Heart right ventricle (tissue), 16 donors: ENCODE measurements at regions of chr6 and their contacts with region 1.

Region 1: GRCh38 chr6:1686117-1687098 is 76.7 kb downstream of the FOXC1 start:
- DNase-seq: peak in 1 of 2 donors; percentile 36
- ATAC-seq: peak; percentile 55 to 93 (median 84)
- H3K4me3 ChIP-seq: no peak overlapping the region
- H3K27ac ChIP-seq: peak overlapping the region in 5 of 10 donors; percentile 4 to 56 (median 31)
- H3K4me1 ChIP-seq: peaks cover 0 to 20% (median 17%) of the 10 kb centered on the region in 9 donors
- H3K27me3 ChIP-seq: no peaks in the 10 kb centered on the region
- CTCF ChIP-seq: peak in 6 of 9 donors; percentile 30 to 55 (median 36)

Region 2: GRCh38 chr6:1724616-1725015 is 38.2 kb after region 1 on chr6:
- intact Hi-C with region 1: loop called in 1 of 10 experiments (anchors 5 kb)
- DNase-seq: peak; percentile 64 to 67
- ATAC-seq: peak; percentile 90 to 99 (median 96)
- H3K4me3 ChIP-seq: no peak overlapping the region
- H3K27ac ChIP-seq: peak overlapping the region in 9 of 10 donors; percentile 39 to 71 (median 62)
- H3K4me1 ChIP-seq: peaks cover 0 to 25% (median 7%) of the 10 kb centered on the region in 9 donors
- H3K27me3 ChIP-seq: no peaks in the 10 kb centered on the region
- CTCF ChIP-seq: no peak

Region 3: GRCh38 chr6:2097464-2097863 is 411.1 kb after region 1 on chr6:
- intact Hi-C with region 1: no loop called
- DNase-seq: no peak
- ATAC-seq: no peak
- H3K4me3 ChIP-seq: no peak overlapping the region
- H3K27ac ChIP-seq: no peak overlapping the region
- H3K4me1 ChIP-seq: no peaks in the 10 kb centered on the region
- H3K27me3 ChIP-seq: no peaks in the 10 kb centered on the region
- CTCF ChIP-seq: no peak